SK-N-SH (cell line): ENCODE measurements at regions of chr16 and their contacts with region 1.

Region 1: DNA sequence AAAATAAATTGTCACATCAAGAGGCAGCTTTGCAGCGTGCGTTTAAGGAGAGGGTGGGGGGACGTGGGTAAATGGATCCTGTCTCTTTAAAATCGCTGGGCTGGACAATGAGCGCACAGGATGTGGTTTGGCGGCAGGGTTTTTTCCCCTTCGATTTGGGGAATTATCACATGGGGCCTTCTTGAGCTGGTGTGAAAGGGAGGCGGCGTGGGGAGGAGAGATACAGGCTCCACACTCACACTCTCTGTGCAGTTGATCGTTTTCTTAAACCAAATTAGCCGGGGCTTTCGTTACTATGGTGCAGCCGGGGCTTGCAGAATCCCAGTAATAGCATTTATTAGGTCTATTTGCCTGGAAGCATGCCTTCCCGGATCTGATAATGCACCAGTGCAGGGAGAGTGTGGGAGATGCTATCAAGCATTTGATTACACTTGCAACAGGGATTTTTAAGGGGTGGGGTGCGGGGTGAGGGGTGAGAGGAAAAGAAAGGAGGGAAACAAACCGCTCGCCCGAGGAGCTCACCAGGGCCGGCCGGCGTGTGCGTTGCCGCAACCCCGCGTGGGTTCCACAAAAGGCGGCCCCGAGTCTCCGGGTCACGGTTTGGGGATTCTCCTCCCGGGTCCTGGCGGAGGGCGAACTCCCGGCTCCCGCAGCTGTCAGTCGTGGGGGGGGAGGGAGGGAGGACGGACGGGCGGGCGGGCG is 58.9 kb upstream of the GSE1 start:
- DNase-seq: peak; percentile 82
- H3K4me3 ChIP-seq: peak overlapping the region; percentile 75 to 84
- H3K27ac ChIP-seq: peak overlapping the region; percentile 73 to 99
- H3K4me1 ChIP-seq: peaks cover 10 to 51% of the 10 kb centered on the region in 2 experiments; a peak in 3 of 4 replicates
- H3K27me3 ChIP-seq: no peaks in the 10 kb centered on the region
- CTCF ChIP-seq: no peak
- EP300 ChIP-seq: peak in 1 of 2 experiments; percentile 87; a peak in 1 of 4 replicates
- RAD21 ChIP-seq: peak; percentile 15; the same call in 1 of the 2 replicates

Region 2: DNA sequence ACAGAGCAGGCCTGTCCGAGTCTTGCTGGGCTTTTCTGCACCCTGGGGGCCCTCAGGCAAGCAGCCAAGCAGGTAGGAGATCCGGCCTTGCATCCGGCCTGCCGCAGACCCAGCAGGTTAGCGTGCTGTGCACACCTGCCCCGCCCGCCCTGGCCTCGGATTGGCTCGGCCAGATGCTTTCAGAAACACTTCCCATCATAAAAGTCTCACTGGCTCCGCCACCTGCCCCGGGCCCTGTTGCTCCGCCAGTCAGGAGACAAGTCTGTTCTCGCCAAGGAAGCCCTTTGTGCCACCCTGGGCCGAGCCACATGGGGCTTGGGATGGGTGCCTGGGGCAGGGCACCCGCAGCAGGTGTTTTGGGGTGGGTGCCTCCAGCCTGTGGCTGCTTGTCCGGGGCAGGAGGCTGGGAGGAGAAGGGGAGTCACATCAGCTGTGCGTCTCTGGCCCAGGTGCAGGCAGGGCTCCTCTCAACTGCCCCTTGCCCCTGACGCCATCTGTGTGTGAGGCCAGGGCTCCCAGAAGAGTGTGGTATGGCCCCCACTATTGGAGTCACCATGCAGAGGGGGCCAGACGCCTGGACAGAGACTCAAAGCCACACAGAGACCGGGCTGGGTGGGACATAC is 169.3 kb before region 1 on chr16:
- CTCF ChIA-PET with region 1: no interaction called
- POLR2A ChIA-PET with region 1: no interaction called
- DNase-seq: no peak
- H3K4me3 ChIP-seq: no peak overlapping the region
- H3K27ac ChIP-seq: peak overlapping the region in 1 of 2 experiments; percentile 99; a peak in 2 of 4 replicates
- H3K4me1 ChIP-seq: peaks cover 9 to 68% of the 10 kb centered on the region in 2 experiments; a peak in 3 of 4 replicates
- H3K27me3 ChIP-seq: no peaks in the 10 kb centered on the region
- CTCF ChIP-seq: no peak
- EP300 ChIP-seq: no peak
- RAD21 ChIP-seq: no peak

Region 3: DNA sequence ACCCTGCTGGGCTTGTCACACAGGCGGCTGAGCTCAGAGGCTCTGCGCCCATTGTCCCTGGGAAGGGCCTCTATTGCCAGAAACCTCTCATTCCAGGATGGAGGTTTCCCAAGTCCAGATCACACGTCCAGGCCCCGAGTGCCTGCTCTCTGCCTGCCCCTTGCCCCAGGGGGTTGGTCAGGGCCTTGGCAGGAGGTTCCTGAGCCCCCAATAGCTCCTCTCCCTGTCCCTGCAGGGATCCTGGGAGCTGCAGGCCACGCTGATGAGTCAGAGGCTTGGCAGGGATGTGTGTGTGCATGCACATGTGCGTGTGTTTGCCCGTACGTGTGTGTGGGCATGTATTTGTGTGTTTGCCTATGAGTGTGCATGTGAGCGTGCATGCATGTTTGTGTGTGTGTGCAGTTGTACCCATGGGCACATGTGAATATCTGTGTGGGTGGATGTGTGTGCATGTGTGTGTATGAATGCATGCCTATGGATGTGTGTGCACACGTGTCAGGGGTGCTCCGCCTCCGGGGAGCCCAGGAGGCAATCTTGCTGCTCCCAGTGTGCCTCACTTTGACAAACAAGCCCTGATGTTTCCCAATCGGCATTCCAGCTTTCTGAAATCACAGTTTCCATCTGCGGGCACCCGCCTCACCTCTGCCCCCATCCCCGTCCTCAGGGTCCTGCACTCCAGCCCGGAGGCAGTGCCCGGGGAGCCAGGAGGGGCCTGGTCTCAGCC is 39.5 kb before region 1 on chr16:
- CTCF ChIA-PET with region 1: interaction called, 15 read pairs
- POLR2A ChIA-PET with region 1: interaction called, 16 read pairs
- DNase-seq: peak; percentile 84
- H3K4me3 ChIP-seq: peak overlapping the region in 1 of 2 experiments; percentile 9; a peak in 1 of 4 replicates
- H3K27ac ChIP-seq: peak overlapping the region; percentile 68 to 81
- H3K4me1 ChIP-seq: peaks cover 25 to 48% of the 10 kb centered on the region in 2 experiments; a peak in 3 of 4 replicates
- H3K27me3 ChIP-seq: no peaks in the 10 kb centered on the region
- CTCF ChIP-seq: no peak
- EP300 ChIP-seq: 0 out of 4 replicates have a peak, but pooled peaks of 1 of the 2 experiments have one; percentile 5
- RAD21 ChIP-seq: 0 out of 2 replicates have a peak, but pooled peaks have one; percentile 1

Region 4: DNA sequence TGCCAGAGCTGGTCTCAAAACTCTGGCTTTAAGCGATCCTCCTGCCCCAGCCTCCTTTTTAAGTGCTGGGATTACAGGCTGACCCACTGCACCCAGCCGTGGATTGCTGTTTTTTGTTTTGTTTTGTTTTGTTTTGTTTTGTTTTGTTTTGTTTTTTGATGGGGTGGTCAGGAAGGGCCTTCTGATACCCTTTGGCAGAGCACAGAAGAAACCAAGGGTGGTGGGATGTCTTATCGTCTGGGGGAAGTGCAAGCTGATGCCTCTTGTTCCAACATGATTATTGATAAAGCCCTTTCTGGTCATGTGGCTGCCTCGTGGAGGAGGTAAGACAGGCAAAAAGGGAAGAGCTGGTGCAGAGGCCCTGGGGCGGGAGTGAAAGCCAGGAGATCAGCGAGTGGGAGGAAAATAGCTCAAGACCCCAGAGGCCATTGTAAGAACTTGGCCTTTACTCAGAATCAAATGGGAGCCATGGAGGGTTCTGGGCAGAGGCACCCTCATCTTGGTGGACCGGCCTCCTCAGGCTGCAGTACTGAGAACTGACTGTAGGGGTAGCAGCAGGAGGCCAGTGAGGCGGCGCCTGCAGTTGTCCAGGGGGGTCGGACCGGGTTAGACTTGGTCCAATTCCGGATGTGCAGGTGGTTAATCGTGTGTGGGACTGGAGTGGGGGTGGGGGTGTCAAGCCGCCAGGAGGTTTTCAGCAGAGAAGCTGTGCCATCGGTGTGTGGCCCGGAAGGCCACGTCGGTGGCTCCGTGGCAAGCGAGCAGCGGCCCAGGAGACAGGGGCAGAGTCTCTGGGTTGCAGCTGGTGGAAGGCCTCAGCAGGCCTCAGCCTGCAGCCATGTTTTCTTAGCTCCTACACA is 25.5 kb before region 1 on chr16:
- CTCF ChIA-PET with region 1: interaction called, 22 read pairs
- POLR2A ChIA-PET with region 1: interaction called, 4 read pairs
- DNase-seq: peak; percentile 70
- H3K4me3 ChIP-seq: no peak overlapping the region
- H3K27ac ChIP-seq: no peak overlapping the region; a peak in 1 of 4 replicates
- H3K4me1 ChIP-seq: peaks cover 0 to 44% of the 10 kb centered on the region in 2 experiments; a peak in 2 of 4 replicates
- H3K27me3 ChIP-seq: no peaks in the 10 kb centered on the region
- CTCF ChIP-seq: peak; percentile 50
- EP300 ChIP-seq: no peak
- RAD21 ChIP-seq: no peak

Region 5: GRCh38 chr16:85536073-85536410 is 18.2 kb before region 1 on chr16:
- CTCF ChIA-PET with region 1: interaction called, 43 read pairs
- POLR2A ChIA-PET with region 1: no interaction called
- DNase-seq: no peak
- H3K4me3 ChIP-seq: no peak overlapping the region
- H3K27ac ChIP-seq: no peak overlapping the region
- H3K4me1 ChIP-seq: peaks cover 0 to 37% of the 10 kb centered on the region in 2 experiments; a peak in 1 of 4 replicates
- H3K27me3 ChIP-seq: no peaks in the 10 kb centered on the region
- CTCF ChIP-seq: no peak
- EP300 ChIP-seq: no peak
- RAD21 ChIP-seq: no peak

Region 6: DNA sequence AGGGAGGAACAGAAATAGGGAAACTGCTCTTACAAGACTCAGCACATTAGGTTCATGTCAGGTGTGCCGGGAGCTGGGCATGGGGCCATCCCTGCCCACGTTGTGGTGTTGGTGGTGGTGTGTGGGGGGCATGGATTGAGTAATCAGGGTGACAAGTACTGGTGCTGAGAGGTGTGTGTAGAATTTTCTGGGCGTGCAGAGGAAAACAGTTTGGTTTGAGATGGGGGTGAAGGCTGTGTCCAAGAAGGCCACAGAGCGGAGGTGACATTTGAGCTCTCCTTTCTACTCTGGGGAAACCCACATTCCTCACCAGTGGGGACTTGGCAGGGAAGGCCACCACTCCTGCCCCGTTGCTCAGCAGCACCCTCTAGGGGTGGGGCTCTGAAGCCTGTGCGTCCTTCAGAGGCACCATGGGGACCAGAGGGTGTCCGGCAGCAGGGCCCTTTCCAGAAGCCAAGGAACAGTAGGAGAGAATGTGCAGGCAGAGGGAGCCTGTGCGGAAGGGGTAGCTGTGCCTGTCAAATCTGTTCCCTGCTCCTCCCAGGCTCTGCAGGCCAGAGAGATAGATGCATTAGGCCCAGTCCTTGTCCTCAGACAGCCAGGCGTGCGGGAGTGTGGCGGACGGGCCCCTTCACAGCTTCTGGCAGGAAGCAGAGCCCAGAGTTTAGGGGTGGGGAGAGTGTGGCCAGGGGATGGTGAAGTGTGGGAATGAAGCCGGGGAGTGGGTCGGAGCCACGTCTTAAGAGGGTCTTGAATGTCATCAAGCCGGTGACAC is 10.2 kb after region 1 on chr16:
- CTCF ChIA-PET with region 1: interaction called, 7 read pairs
- POLR2A ChIA-PET with region 1: interaction called, 15 read pairs
- DNase-seq: no peak
- H3K4me3 ChIP-seq: no peak overlapping the region
- H3K27ac ChIP-seq: peak overlapping the region in 1 of 2 experiments; percentile 89; a peak in 2 of 4 replicates
- H3K4me1 ChIP-seq: peaks cover 13 to 45% of the 10 kb centered on the region in 2 experiments; a peak in 3 of 4 replicates
- H3K27me3 ChIP-seq: no peaks in the 10 kb centered on the region
- CTCF ChIP-seq: peak; percentile 64
- EP300 ChIP-seq: no peak
- RAD21 ChIP-seq: no peak